CD8-positive, alpha-beta memory T cell (primary cell): ENCODE measurements at regions of chr18 and their contacts with region 1.

Region 1: GRCh38 chr18:2994603-2995432 is 18.1 kb downstream of the LPIN2 start:
- DNase-seq: peak; percentile 41 to 84 (median 73)
- H3K4me3 ChIP-seq: no peak overlapping the region
- H3K4me3 Mint-ChIP-seq: peak overlapping the region; percentile 39 to 86 (median 72)
- H3K27ac ChIP-seq: peak overlapping the region; percentile 39
- H3K27ac Mint-ChIP-seq: peak overlapping the region; percentile 15 to 85 (median 73)
- H3K4me1 ChIP-seq: peaks cover 59% of the 10 kb centered on the region
- H3K4me1 Mint-ChIP-seq: peaks cover 71 to 82% (median 82%) of the 10 kb centered on the region in 3 donors
- H3K27me3 ChIP-seq: no peaks in the 10 kb centered on the region
- H3K27me3 Mint-ChIP-seq: peaks cover 0 to 1% of the 10 kb centered on the region in 2 donors

Region 2: DNA sequence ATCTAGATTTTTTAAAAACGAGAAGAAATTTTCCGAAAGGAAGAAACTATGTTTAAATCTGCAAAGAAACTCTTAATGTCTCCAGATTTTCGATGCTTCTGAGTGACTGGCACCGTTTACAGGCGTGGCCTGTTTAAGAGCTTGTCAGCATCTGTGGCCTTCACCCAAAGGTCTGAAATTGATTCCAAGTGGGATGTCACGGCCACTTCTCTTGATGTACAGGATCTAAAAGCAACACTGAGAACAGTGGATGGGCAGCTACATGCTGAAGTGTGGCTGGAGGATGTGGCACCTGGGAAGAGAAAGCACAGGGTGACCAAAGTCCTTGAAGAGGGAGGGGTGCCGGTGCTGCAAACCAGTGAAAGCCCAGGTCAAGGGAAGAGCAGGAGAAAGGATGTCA is 120.1 kb before region 1 on chr18:
- CTCF ChIA-PET with region 1: no interaction called
- POLR2A ChIA-PET with region 1: no interaction called
- DNase-seq: no peak
- H3K4me3 ChIP-seq: no peak overlapping the region
- H3K4me3 Mint-ChIP-seq: no peak overlapping the region
- H3K27ac ChIP-seq: no peak overlapping the region
- H3K27ac Mint-ChIP-seq: no peak overlapping the region
- H3K4me1 ChIP-seq: no peaks in the 10 kb centered on the region
- H3K4me1 Mint-ChIP-seq: peaks cover 0 to under 1% (median 0%) of the 10 kb centered on the region in 3 donors
- H3K27me3 ChIP-seq: no peaks in the 10 kb centered on the region
- H3K27me3 Mint-ChIP-seq: peaks cover 1 to 9% of the 10 kb centered on the region in 2 donors

Region 3: GRCh38 chr18:2932247-2933181 is 62.3 kb before region 1 on chr18:
- CTCF ChIA-PET with region 1: interaction called, 24 read pairs
- POLR2A ChIA-PET with region 1: interaction called, 8 read pairs
- DNase-seq: peak in 4 of 5 donors; percentile 22 to 69 (median 60)
- H3K4me3 ChIP-seq: no peak overlapping the region
- H3K4me3 Mint-ChIP-seq: peak overlapping the region in 4 of 7 donors; percentile 8 to 42 (median 20)
- H3K27ac ChIP-seq: no peak overlapping the region
- H3K27ac Mint-ChIP-seq: peak overlapping the region; percentile 85 to 96 (median 91)
- H3K4me1 ChIP-seq: peaks cover 9% of the 10 kb centered on the region
- H3K4me1 Mint-ChIP-seq: peaks cover 29 to 47% (median 45%) of the 10 kb centered on the region in 3 donors
- H3K27me3 ChIP-seq: no peaks in the 10 kb centered on the region
- H3K27me3 Mint-ChIP-seq: no peaks in the 10 kb centered on the region

Region 4: GRCh38 chr18:2971741-2972552 is 22.9 kb before region 1 on chr18:
- CTCF ChIA-PET with region 1: interaction called, 17 read pairs
- POLR2A ChIA-PET with region 1: no interaction called
- DNase-seq: peak; percentile 51 to 87 (median 58)
- H3K4me3 ChIP-seq: peak overlapping the region; percentile 51
- H3K4me3 Mint-ChIP-seq: peak overlapping the region; percentile 81 to 91 (median 87)
- H3K27ac ChIP-seq: peak overlapping the region; percentile 71
- H3K27ac Mint-ChIP-seq: peak overlapping the region; percentile 96 to 100 (median 98)
- H3K4me1 ChIP-seq: peaks cover 95% of the 10 kb centered on the region
- H3K4me1 Mint-ChIP-seq: peaks cover 80 to 97% (median 95%) of the 10 kb centered on the region in 3 donors
- H3K27me3 ChIP-seq: no peaks in the 10 kb centered on the region
- H3K27me3 Mint-ChIP-seq: no peaks in the 10 kb centered on the region

Region 5: GRCh38 chr18:3055818-3056217 is 61.0 kb after region 1 on chr18:
- CTCF ChIA-PET with region 1: interaction called, 45 read pairs
- POLR2A ChIA-PET with region 1: interaction called, 30 read pairs
- DNase-seq: no peak
- H3K4me3 ChIP-seq: no peak overlapping the region
- H3K4me3 Mint-ChIP-seq: no peak overlapping the region
- H3K27ac ChIP-seq: no peak overlapping the region
- H3K27ac Mint-ChIP-seq: no peak overlapping the region
- H3K4me1 ChIP-seq: peaks cover 65% of the 10 kb centered on the region
- H3K4me1 Mint-ChIP-seq: peaks cover 60 to 73% (median 67%) of the 10 kb centered on the region in 3 donors
- H3K27me3 ChIP-seq: no peaks in the 10 kb centered on the region
- H3K27me3 Mint-ChIP-seq: peaks cover 0 to 2% of the 10 kb centered on the region in 2 donors

Region 6: GRCh38 chr18:3151399-3152264 is 156.8 kb after region 1 on chr18:
- CTCF ChIA-PET with region 1: interaction called, 20 read pairs
- POLR2A ChIA-PET with region 1: interaction called, 5 read pairs
- DNase-seq: peak in 2 of 5 donors; percentile 19 to 37
- H3K4me3 ChIP-seq: no peak overlapping the region
- H3K4me3 Mint-ChIP-seq: no peak overlapping the region
- H3K27ac ChIP-seq: no peak overlapping the region
- H3K27ac Mint-ChIP-seq: no peak overlapping the region
- H3K4me1 ChIP-seq: no peaks in the 10 kb centered on the region
- H3K4me1 Mint-ChIP-seq: peaks cover 6 to 13% (median 9%) of the 10 kb centered on the region in 3 donors
- H3K27me3 ChIP-seq: no peaks in the 10 kb centered on the region
- H3K27me3 Mint-ChIP-seq: no peaks in the 10 kb centered on the region